Heart right ventricle (tissue), 16 donors: ENCODE measurements at regions of chr3 and their contacts with region 1.

Region 1: GRCh38 chr3:139329345-139329850 is 14.4 kb upstream of the MRPS22 start:
- DNase-seq: peak; percentile 81 to 89
- ATAC-seq: peak; percentile 92 to 99 (median 97)
- H3K4me3 ChIP-seq: no peak overlapping the region
- H3K27ac ChIP-seq: no peak overlapping the region
- H3K4me1 ChIP-seq: peaks cover 0 to 10% (median 4%) of the 10 kb centered on the region in 9 donors
- H3K27me3 ChIP-seq: peaks cover 0 to 35% (median 30%) of the 10 kb centered on the region in 7 donors
- CTCF ChIP-seq: peak in 8 of 9 donors; percentile 97 to 100 (median 99)

Region 2: GRCh38 chr3:138935848-138936740 is 393.3 kb before region 1 on chr3:
- intact Hi-C with region 1: loop called in 9 of 10 experiments (anchors 2 to 5 kb)
- DNase-seq: peak; percentile 71 to 83
- ATAC-seq: peak; percentile 69 to 85 (median 78)
- H3K4me3 ChIP-seq: peak overlapping the region in 9 of 10 donors; percentile 12 to 44 (median 41)
- H3K27ac ChIP-seq: no peak overlapping the region
- H3K4me1 ChIP-seq: peaks cover 17 to 47% (median 44%) of the 10 kb centered on the region in 9 donors
- H3K27me3 ChIP-seq: peaks cover 38 to 71% (median 60%) of the 10 kb centered on the region in 7 donors
- CTCF ChIP-seq: peak; percentile 86 to 98 (median 95)

Region 3: GRCh38 chr3:138941259-138941885 is 388.0 kb before region 1 on chr3:
- intact Hi-C with region 1: loop called in 9 of 10 experiments (anchors 2 to 5 kb)
- DNase-seq: no peak
- ATAC-seq: no peak
- H3K4me3 ChIP-seq: no peak overlapping the region
- H3K27ac ChIP-seq: no peak overlapping the region
- H3K4me1 ChIP-seq: peaks cover 24 to 63% (median 56%) of the 10 kb centered on the region in 9 donors
- H3K27me3 ChIP-seq: peaks cover 83 to 100% (median 99%) of the 10 kb centered on the region in 7 donors
- CTCF ChIP-seq: peak in 8 of 9 donors; percentile 5 to 53 (median 26)

Region 4: DNA sequence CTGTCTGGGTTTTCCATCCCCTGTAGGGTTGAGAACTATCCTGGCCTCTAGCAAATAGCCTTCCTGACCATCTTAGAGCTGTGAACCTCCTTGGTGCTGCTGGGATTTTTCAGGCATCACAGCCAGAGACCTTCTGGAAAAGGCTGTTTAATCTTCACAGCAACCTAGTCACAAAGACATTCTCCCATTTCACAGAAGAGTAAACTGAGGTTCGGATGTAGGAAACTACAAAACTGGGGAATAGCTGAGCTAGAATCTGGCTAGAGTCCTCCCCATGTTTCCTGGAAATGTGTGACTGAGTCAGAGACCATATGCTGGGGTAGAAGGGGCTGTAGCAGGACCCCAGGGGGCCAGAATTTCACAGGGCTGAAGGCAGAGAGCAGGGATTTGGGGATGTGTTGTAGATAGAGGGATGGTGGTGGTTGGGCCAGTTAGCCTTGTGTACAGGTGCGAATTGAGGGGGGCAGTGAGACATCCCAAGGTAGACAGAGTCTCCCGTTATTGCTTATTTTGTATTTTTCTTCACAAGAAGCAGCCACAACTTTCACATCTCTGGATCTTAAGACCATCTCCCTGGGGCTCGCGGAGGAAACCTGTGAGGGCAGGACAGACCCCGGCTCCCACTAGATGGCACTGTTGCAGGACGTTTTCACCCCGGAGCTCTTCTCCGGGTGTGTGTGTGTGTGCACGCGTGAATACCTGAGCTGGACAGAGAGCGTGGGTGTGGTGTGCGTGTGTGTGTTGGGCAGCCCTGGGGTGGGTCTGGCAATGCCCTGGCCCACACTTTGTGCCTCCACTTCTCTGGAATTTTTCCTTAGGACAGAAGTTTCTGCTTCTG is 217.8 kb before region 1 on chr3:
- intact Hi-C with region 1: loop called (anchors 2 to 5 kb)
- DNase-seq: peak; percentile 47 to 53
- ATAC-seq: peak; percentile 35 to 87 (median 79)
- H3K4me3 ChIP-seq: no peak overlapping the region
- H3K27ac ChIP-seq: no peak overlapping the region
- H3K4me1 ChIP-seq: no peaks in the 10 kb centered on the region
- H3K27me3 ChIP-seq: peaks cover 0 to 12% (median 8%) of the 10 kb centered on the region in 7 donors
- CTCF ChIP-seq: peak; percentile 48 to 83 (median 70)

Region 5: GRCh38 chr3:139281522-139282196 is 47.7 kb before region 1 on chr3:
- intact Hi-C with region 1: loop called in 1 of 10 experiments (anchors 2 kb)
- DNase-seq: no peak
- ATAC-seq: no peak
- H3K4me3 ChIP-seq: no peak overlapping the region
- H3K27ac ChIP-seq: no peak overlapping the region
- H3K4me1 ChIP-seq: peaks cover 0 to 13% (median 0%) of the 10 kb centered on the region in 9 donors
- H3K27me3 ChIP-seq: no peaks in the 10 kb centered on the region
- CTCF ChIP-seq: no peak